Breast epithelium (tissue), 4 donors: ENCODE measurements at regions of chr15 and their contacts with region 1.

Region 1: GRCh38 chr15:93085692-93086091 is 3.3 kb downstream of the RGMA start:
- DNase-seq: no peak
- H3K4me3 ChIP-seq: peak overlapping the region in 1 of 3 donors; percentile 16
- H3K27ac ChIP-seq: peak overlapping the region in 1 of 2 donors; percentile 48
- H3K4me1 ChIP-seq: no peaks in the 10 kb centered on the region
- H3K27me3 ChIP-seq: peaks cover 0 to 8% of the 10 kb centered on the region in 2 donors
- CTCF ChIP-seq: no peak
- POLR2A ChIP-seq: no peak

Region 2: GRCh38 chr15:92949604-92950249 is 136.0 kb before region 1 on chr15:
- intact Hi-C with region 1: no loop called
- DNase-seq: no peak
- H3K4me3 ChIP-seq: no peak overlapping the region
- H3K27ac ChIP-seq: no peak overlapping the region
- H3K4me1 ChIP-seq: no peaks in the 10 kb centered on the region
- H3K27me3 ChIP-seq: no peaks in the 10 kb centered on the region
- CTCF ChIP-seq: no peak
- POLR2A ChIP-seq: no peak

Region 3: DNA sequence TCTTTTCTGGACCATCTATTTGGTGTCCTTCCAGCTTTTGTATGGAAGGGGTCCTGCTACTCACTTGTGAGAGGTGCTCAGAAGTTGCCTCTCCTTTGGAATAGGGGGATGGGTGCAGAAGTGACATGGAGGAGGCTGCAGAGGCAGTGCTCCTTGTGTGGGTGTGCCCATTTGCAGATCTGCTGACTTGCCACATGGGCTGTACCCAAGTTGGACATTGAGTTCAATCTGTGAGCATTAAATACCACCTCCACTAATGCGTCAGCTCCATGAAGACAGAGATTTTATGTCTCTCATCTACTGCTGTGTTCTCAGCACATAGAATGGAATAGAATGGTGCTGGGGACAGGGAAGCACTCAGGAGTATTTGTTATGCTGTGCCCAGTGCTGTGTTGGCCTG is 72.9 kb before region 1 on chr15:
- intact Hi-C with region 1: no loop called
- DNase-seq: no peak
- H3K4me3 ChIP-seq: no peak overlapping the region
- H3K27ac ChIP-seq: no peak overlapping the region
- H3K4me1 ChIP-seq: no peaks in the 10 kb centered on the region
- H3K27me3 ChIP-seq: no peaks in the 10 kb centered on the region
- CTCF ChIP-seq: no peak
- POLR2A ChIP-seq: no peak

Region 4: DNA sequence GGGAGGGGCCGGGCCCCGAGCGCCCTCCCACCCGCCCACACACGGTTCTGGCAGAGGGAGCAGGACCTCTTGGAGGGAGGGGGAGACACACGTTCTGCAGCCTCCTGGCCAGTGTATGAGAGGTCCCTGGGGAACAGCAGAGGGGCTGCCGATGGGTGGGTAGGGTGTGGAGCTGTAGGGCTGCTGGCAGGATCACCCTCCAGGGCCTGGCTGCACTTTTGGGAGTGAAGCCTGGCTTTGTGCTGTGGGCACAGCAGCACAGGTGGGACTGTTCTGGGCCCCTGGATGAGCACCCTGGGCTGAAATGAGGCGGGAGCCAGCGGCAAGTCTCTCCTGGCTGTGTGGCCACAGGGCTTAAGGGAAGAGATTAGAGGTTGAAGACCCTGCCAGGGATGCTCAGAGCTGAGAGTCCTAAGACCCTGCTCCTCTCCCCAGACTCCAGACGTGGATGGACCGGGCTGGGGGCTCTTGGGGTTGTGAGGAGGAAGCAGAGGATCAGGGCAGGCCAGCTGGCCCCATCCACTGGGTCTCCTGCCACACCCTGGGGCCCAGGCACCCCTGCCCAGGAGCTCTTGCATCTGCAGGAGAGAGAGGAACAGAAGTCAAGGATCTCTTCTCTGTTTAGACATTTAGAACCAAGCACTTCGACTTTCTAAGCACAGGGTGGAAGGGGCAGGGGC is 41.9 kb before region 1 on chr15:
- intact Hi-C with region 1: loop called (anchors 1 kb)
- DNase-seq: no peak
- H3K4me3 ChIP-seq: no peak overlapping the region
- H3K27ac ChIP-seq: peak overlapping the region in 1 of 2 donors; percentile 10
- H3K4me1 ChIP-seq: peaks cover 6 to 20% of the 10 kb centered on the region in 2 donors
- H3K27me3 ChIP-seq: no peaks in the 10 kb centered on the region
- CTCF ChIP-seq: no peak
- POLR2A ChIP-seq: no peak

Region 5: GRCh38 chr15:93051236-93052089 is 34.2 kb before region 1 on chr15:
- intact Hi-C with region 1: loop called (anchors 1 kb)
- DNase-seq: no peak
- H3K4me3 ChIP-seq: peak overlapping the region in 1 of 3 donors; percentile 8
- H3K27ac ChIP-seq: peak overlapping the region; percentile 50 to 72
- H3K4me1 ChIP-seq: peaks cover 21 to 34% of the 10 kb centered on the region in 2 donors
- H3K27me3 ChIP-seq: no peaks in the 10 kb centered on the region
- CTCF ChIP-seq: no peak
- POLR2A ChIP-seq: no peak